Activated CD4-positive, alpha-beta T cell treated with anti-CD3 and anti-CD28 coated beads, Interleukin-2, amount 10 ng/mL, durations not matched to agents 24 days and 14 days (primary cell): ENCODE measurements at regions of chr16 and their contacts with region 1.

Region 1: DNA sequence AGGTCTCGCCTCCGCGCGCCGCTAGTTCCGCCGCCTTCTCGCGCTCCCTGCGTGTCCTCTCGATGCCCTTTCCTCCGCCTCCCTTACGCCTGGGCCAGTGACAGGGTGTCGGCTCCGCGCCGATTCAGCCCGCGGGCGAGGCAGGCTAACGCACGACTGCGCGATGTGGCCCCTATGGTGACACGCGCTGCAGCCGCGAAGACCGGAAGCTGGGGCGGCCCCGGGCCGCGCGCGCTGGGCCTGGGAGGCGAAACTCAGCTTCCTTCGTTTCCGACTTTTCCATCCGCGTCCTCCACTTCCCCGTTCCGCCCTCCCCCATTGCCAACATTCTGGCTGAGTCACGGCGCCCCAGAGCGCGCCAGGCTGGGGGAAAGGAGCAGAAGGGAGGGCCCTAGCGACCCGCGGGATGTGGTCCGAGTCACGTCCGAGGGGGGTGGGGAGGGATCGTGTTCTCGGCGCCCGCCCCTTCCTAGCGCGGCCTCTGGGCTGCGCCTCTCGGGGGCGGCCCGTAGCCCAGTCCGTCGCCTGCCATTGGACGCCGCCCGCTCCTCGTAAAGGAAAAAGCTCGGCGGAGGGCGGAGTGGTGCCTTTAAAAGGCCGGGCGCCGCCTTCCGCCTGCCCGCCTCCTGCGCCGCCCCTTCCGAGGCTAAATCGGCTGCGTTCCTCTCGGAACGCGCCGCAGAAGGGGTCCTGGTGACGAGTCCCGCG is at the start of gene ALDOA:
- DNase-seq: peak; percentile 99
- H3K4me3 Mint-ChIP-seq: peak within 1 kb of the TSS; percentile 92
- H3K27ac Mint-ChIP-seq: peak within 1 kb of the TSS; percentile 99
- H3K4me1 Mint-ChIP-seq: peaks cover 35% of the 10 kb centered on the region
- H3K27me3 Mint-ChIP-seq: no peaks in the 10 kb centered on the region
- total RNA-seq, gene ALDOA: 2,074 and 2,109 TPM in 2 replicates

Region 2: DNA sequence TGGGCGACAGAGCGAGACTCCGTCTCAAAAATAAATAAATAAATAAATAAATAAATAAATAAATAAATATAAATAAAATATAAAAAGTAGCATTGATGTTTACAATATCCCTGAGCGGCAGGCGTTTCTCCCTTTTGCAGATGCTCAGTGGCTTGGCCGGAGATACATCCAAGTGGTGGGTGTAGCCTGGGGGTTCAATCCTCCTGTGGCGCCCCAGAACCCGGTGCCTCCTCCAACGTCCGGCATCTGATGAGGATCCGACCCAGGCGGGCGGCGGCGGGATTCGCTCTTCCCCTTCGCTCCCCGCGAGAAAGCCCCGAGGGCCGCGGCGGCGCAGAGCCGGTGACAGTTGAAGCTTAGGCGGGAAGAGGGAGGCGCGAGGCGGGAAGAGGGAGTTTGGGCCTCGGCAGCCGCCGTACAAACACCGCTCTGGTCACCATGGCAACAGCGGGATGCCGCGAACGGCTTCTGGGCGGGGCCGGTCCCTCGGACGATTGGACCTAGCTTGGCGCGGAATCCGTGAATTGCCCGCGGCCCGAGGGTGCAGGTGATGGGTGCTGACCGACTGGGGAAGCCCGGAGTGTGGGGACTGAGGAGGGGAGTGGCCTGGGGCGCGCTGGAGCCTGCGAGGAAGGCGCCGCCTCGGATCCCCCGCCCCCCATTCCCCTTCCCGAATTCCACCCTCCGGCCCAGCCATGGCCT is 12.5 kb before region 1 on chr16:
- intact Hi-C with region 1: loop called (anchors 1 kb)
- DNase-seq: peak; percentile 98
- H3K4me3 Mint-ChIP-seq: peak overlapping the region; percentile 87
- H3K27ac Mint-ChIP-seq: peak overlapping the region; percentile 81
- H3K4me1 Mint-ChIP-seq: peaks cover 31% of the 10 kb centered on the region
- H3K27me3 Mint-ChIP-seq: no peaks in the 10 kb centered on the region

Region 3: DNA sequence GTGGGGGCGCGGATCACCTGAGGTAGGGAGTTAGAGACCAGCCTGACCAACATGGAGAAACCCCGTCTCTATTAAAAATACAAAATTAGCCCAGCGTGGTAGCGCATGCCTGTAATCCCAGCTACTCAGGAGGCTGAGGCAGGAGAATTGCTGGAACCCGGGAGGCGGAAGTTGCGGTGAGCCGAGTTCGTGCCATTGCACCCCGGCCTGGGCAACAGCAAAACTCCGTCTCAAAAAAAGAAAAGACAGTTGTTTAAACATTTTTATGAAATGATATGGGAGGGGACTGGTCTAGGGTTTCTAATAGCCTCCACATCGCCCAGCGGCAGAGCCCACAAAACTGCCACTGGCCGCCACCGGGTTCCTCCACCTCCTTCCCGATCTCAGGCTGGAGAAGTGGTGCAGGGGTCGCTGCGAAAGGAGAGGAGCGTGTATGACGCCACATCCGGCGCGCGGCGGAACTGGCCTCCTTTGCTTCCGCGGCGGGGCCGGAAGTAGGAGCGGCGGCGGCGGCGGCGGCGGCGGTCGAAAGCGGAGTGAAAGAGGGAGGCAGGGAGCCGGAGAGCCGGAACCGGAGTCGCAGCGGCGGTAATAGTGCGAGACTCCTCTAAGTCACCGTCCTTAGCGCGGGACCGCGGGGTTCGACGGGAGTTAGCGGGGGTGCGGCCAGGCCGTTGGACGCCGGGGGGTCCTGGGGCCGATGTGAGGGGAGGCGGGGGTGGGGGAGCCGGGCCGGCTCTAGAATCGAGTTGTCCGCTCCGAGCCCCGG is 10.4 kb after region 1 on chr16 and contains the start of gene PPP4C:
- intact Hi-C with region 1: loop called (anchors 1 kb)
- DNase-seq: peak; percentile 98
- H3K4me3 Mint-ChIP-seq: peak within 1 kb of the TSS; percentile 91
- H3K27ac Mint-ChIP-seq: peak within 1 kb of the TSS; percentile 89
- H3K4me1 Mint-ChIP-seq: peaks cover 28% of the 10 kb centered on the region
- H3K27me3 Mint-ChIP-seq: no peaks in the 10 kb centered on the region
- total RNA-seq, gene PPP4C: 144 and 145 TPM in 2 replicates

Region 4: DNA sequence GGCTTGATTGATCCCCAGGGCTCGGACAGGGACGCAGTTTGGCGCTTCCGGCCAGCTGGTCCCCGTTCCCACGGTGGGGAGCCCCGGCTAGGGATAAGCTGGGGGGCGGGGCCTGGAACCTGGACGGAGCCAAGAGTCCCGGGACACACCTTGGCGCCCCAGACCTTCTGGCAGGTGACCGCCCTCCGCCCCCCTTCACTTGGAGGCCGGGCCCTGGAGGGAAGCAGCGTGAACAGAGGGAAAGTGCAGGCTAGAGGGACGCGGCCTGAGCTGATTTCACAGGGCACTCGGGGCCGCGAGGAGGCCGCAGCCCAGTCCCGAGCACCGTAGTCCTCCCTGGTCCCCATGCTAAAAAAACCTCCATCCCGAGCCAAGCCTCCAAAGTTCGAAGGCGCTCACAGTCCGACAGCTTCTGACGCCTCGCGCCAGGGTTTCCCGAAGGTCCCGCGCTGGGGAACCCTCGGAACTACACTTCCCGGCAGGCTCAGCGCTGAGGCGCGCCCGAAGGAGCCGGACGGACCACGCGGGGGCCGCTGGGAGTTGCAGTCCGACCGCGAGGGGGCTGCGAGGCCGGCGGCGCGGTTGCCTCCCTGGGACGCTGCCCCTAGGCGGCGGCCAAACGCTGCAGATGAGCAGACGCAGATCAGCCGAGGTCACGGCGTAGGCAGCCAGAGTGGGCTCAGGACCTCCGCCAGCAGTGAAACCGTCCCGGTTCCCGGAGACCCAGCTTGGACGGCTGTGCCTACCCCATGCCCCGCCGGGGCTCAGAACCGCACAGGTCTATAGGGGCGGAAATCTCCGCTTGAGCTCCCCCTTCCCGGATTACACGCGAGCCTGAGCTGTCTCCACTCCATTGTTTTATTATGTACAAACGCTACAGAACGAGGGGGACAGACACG is 26.4 kb after region 1 on chr16 and contains the start of gene TBX6:
- intact Hi-C with region 1: loop called (anchors 1 kb)
- DNase-seq: peak; percentile 98
- H3K4me3 Mint-ChIP-seq: peak within 1 kb of the TSS; percentile 87
- H3K27ac Mint-ChIP-seq: peak within 1 kb of the TSS; percentile 93
- H3K4me1 Mint-ChIP-seq: peaks cover 40% of the 10 kb centered on the region
- H3K27me3 Mint-ChIP-seq: no peaks in the 10 kb centered on the region
- total RNA-seq, gene TBX6: 2.1 TPM in 2 replicates

Region 5: GRCh38 chr16:30131869-30132475 is 66.7 kb after region 1 on chr16:
- intact Hi-C with region 1: no loop called
- DNase-seq: no peak
- H3K4me3 Mint-ChIP-seq: no peak overlapping the region
- H3K27ac Mint-ChIP-seq: peak overlapping the region; percentile 51
- H3K4me1 Mint-ChIP-seq: peaks cover 4% of the 10 kb centered on the region
- H3K27me3 Mint-ChIP-seq: no peaks in the 10 kb centered on the region